ENCODE measurements at regions of chr10 and their contacts with region 1.

Region 1: GRCh38 chr10:53477313-53477675 is 704.7 kb upstream of the MBL2 start:
- DNase-seq: no peak
- H3K4me3 ChIP-seq: no peak overlapping the region; a peak in 1 of 8 replicates
- H3K27ac ChIP-seq: peak overlapping the region; percentile 89
- H3K4me1 ChIP-seq: peaks cover 3 to 23% (median 8%) of the 10 kb centered on the region in 4 experiments; a peak in 5 of 7 replicates
- H3K27me3 ChIP-seq: no peaks in the 10 kb centered on the region
- CTCF ChIP-seq: no peak
- EP300 ChIP-seq: no peak; a peak in 1 of 3 replicates
- POLR2A ChIP-seq: peak in 1 of 2 experiments; percentile 78; a peak in 2 of 3 replicates
- RAD21 ChIP-seq: no peak; a peak in 1 of 4 replicates

Region 2: GRCh38 chr10:53403688-53404087 is 73.6 kb before region 1 on chr10:
- CTCF ChIA-PET with region 1: no interaction called
- POLR2A ChIA-PET with region 1: no interaction called
- DNase-seq: no peak
- H3K4me3 ChIP-seq: no peak overlapping the region
- H3K27ac ChIP-seq: no peak overlapping the region; the same call in 1 of the 2 replicates
- H3K4me1 ChIP-seq: peaks cover 0 to 4% (median 1%) of the 10 kb centered on the region in 4 experiments; a peak in 3 of 7 replicates
- H3K27me3 ChIP-seq: no peaks in the 10 kb centered on the region
- CTCF ChIP-seq: no peak
- EP300 ChIP-seq: no peak
- POLR2A ChIP-seq: no peak
- RAD21 ChIP-seq: no peak

Region 3: GRCh38 chr10:53453196-53453595 is 24.1 kb before region 1 on chr10:
- CTCF ChIA-PET with region 1: interaction called, 10 read pairs
- POLR2A ChIA-PET with region 1: interaction called, 4 read pairs
- DNase-seq: no peak
- H3K4me3 ChIP-seq: no peak overlapping the region
- H3K27ac ChIP-seq: no peak overlapping the region
- H3K4me1 ChIP-seq: peaks cover 0 to 3% (median 0%) of the 10 kb centered on the region in 4 experiments; a peak in 1 of 7 replicates
- H3K27me3 ChIP-seq: no peaks in the 10 kb centered on the region
- CTCF ChIP-seq: peak in 2 of 3 experiments; percentile 42 to 68; a peak in 2 of 4 replicates
- EP300 ChIP-seq: no peak
- POLR2A ChIP-seq: no peak
- RAD21 ChIP-seq: peak; percentile 50 to 64

Region 4: DNA sequence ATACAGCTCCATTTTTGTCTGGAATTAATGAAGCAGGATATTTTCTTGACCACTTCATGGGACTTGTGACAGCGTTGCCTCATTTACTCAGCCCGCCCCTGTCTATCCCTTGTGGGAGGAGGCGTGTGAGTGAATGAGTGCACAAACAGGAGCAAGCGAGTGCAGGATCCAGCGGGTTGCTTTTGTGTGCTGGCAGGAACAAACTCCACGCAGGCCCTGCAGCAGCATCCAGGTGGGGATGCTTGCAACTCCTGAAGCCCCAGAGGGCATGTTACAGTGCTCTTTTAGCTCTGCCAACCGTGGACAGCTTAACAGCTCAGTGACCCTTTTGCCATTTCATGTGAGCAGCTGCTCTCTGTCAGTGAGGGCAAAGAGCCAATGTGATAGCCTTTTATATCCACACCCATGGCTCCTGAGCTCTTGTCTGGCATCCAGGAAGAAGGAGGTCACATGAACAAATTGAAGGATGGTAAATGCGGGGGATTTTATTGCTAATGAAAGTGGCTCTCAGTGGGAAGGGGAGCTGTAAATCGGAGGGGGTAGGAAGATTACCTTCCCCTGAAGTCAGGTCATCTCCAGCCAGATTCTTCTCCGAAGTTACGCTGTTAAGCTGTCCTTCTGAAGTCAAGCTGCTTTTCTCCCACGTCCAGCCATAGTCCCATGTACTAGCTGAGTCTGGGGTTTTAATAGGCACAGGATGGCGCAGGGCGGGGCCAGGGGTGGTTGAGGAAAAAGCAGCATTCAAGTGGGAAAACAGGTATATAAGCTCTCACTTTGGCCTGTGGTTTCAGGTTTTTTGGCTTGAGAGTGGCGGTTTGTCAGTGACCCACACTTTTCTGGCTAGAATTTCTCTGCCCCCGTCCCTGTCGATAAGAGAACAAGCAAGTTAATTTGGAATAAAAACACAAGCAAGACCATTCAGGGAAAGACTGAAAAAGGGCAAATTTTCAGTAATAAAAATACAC is 10.0 kb after region 1 on chr10:
- CTCF ChIA-PET with region 1: no interaction called
- POLR2A ChIA-PET with region 1: interaction called, 11 read pairs
- DNase-seq: no peak
- H3K4me3 ChIP-seq: no peak overlapping the region
- H3K27ac ChIP-seq: no peak overlapping the region
- H3K4me1 ChIP-seq: peaks cover 0 to 4% (median 0%) of the 10 kb centered on the region in 4 experiments; a peak in 1 of 7 replicates
- H3K27me3 ChIP-seq: peaks cover 0 to 1% (median 0%) of the 10 kb centered on the region in 4 experiments; a peak in 1 of 7 replicates
- CTCF ChIP-seq: no peak
- EP300 ChIP-seq: no peak
- POLR2A ChIP-seq: no peak
- RAD21 ChIP-seq: no peak

Region 5: DNA sequence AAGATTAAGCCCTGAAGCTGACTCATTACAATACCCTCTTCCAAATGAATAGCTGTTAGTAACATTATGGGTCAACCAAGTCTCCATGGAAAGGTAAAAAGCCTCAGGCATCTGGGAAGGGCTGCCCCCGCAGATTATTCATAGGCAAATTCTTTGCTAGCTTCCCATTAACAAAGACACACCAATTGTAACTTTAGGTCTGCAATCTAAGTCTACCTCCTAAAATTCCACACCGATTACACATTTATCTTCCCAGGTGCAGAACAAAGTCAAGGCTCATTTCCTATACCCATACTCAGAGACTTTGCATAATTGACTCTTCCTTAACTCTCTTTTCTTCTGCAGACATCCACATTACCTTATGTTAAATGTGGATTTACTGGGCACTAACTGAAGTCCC is 121.6 kb after region 1 on chr10:
- CTCF ChIA-PET with region 1: no interaction called
- POLR2A ChIA-PET with region 1: interaction called, 30 read pairs
- DNase-seq: peak in 1 of 2 experiments; percentile 80
- H3K4me3 ChIP-seq: 0 out of 8 replicates have a peak overlapping the region, but pooled peaks of 1 of the 4 experiments have one; percentile 24
- H3K27ac ChIP-seq: no peak overlapping the region; the same call in 1 of the 2 replicates
- H3K4me1 ChIP-seq: peaks cover 0 to 14% (median 9%) of the 10 kb centered on the region in 4 experiments; a peak in 4 of 7 replicates
- H3K27me3 ChIP-seq: no peaks in the 10 kb centered on the region
- CTCF ChIP-seq: no peak
- EP300 ChIP-seq: peak in 1 of 2 experiments; percentile 90; a peak in 2 of 3 replicates
- POLR2A ChIP-seq: no peak
- RAD21 ChIP-seq: peak; percentile 7; a peak in 2 of 4 replicates